AG04449 (cell line): ENCODE measurements at regions of chr1 and their contacts with region 1.

Region 1: DNA sequence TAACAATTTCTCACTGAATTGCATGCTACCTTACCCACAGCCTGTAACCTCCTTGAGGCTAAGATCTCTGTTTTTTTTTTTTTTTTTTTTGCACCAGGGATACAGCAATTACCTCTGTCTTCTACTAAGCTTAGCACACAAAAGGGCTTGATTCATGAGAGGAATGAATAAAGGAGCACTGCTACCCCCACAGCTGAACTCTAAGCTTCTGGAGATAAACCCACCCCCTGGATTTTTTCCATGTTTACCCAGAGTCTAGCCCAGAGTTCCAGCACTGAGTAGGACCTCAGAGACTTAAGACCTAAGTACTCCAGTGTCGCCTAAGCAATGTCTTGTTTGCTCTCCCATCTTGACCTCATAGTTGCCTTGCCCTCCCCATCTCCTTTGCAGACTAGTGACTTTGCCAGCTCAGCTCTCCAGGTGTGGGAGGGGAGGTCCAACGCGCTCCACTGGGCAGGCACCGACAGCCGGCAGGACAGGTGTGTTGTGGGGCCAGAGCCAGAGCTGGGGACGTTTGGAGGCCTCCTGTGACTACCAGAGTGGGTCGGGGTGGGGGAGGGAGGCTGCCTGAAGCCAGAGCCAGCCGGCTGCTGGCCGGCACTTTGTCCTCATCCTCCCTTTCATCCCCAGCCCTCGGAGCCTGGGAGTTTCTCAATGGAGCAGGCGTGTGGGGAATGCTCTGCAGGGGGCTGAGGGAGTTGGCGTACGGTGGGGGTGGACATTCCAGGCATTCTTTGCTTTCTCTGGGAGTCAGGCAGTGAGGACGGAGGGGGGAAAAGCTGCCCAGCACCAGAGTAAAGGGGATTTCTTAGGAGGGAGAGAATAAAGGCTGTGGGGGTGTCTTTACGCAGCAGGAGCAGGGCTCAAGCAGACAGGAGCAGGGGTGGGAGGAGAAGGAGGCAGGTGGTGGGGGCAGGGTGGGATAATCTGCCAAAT is 20.4 kb downstream of the NUAK2 start:
- DNase-seq: peak; percentile 92
- H3K4me3 ChIP-seq: no peak overlapping the region; the same call in 1 of the 2 replicates
- CTCF ChIP-seq: no peak

Region 2: DNA sequence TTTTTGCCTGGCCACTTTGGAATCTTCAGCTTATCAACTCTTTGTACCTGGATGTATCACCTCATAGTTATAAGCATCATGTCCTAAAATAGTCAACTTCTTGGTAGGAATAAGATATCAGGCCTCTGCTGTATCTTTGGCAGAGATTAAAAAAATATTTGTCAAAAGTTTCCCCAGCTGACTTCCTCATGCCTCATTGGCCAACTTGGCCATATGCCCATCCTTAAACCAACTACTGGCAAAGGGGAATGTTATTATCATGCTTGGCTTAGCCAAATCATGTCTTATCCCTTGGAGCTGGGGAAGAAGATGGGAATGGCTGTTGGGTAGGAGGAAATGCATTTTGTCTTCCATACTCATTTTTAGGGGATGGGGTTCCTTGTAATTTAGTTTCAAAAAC is 407.1 kb before region 1 on chr1:
- CTCF ChIA-PET with region 1: no interaction called
- POLR2A ChIA-PET with region 1: no interaction called
- DNase-seq: no peak
- H3K4me3 ChIP-seq: no peak overlapping the region
- CTCF ChIP-seq: no peak

Region 3: DNA sequence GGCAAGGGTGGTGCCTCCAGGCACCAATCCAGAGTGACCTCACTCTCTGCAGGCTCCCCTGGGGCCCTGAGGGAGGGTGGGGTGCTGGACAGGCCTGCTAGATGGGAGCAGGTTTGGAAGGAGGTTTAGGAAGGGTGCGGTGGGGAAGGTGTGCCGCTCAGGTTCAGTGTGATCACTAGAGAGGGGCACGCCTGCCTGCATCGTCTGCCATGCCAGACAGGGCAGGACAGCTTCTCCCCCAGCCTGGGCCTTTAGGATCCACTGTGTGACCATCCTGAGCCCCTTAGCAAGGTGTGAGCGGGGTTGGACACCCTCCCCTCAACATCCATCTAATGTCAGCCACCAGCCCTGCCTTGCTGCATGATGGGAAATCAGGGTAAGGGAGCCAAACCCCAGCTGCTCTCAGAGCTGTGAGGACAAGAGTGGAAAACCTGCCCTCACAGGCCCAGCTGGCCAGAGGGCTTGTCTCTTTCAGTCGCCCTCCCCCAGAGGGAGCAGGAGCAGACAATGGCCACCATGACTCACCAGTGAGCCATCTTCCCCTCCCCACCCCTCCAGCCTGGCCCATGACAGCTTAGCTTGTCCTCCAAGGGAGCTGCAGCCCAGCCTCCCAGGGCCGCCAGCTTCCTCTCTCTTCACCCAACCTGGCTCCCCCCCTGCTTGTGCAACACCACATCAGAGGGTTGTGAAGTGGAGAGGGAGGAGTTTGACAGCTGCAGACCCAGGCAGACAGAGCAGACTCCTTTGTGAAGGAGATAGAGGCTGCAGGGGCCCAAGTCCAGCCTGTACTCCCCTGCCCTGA is 16.6 kb before region 1 on chr1:
- CTCF ChIA-PET with region 1: interaction called, 4 read pairs
- POLR2A ChIA-PET with region 1: interaction called, 25 read pairs
- DNase-seq: peak; percentile 94
- H3K4me3 ChIP-seq: no peak overlapping the region
- CTCF ChIP-seq: peak; percentile 51

Region 4: GRCh38 chr1:205321164-205321958 is 20.2 kb after region 1 on chr1 and contains the start of gene NUAK2:
- CTCF ChIA-PET with region 1: interaction called, 221 read pairs
- POLR2A ChIA-PET with region 1: interaction called, 8 read pairs
- DNase-seq: no peak
- H3K4me3 ChIP-seq: peak within 1 kb of the TSS; percentile 98
- CTCF ChIP-seq: peak; percentile 48